ENCODE measurements at regions of chr10 and their contacts with region 1.

Region 1: GRCh38 chr10:114953047-114953446 is 15.1 kb downstream of the TRUB1 start:
- DNase-seq: no peak
- ATAC-seq: peak; percentile 78
- H3K4me3 ChIP-seq: no peak overlapping the region
- H3K27ac ChIP-seq: no peak overlapping the region
- H3K4me1 ChIP-seq: peaks cover 13% of the 10 kb centered on the region; the same call in 1 of the 2 replicates
- H3K27me3 ChIP-seq: no peaks in the 10 kb centered on the region
- CTCF ChIP-seq: no peak
- EP300 ChIP-seq: 0 out of 4 replicates have a peak, but pooled peaks of 1 of the 2 experiments have one; percentile 17
- POLR2A ChIP-seq: no peak
- RAD21 ChIP-seq: no peak

Region 2: GRCh38 chr10:114821293-114821914 is 131.6 kb before region 1 on chr10 and contains the start of gene FHIP2A:
- CTCF ChIA-PET with region 1: interaction called, 3 read pairs
- POLR2A ChIA-PET with region 1: no interaction called
- RAD21 ChIA-PET with region 1: no interaction called
- SMC1A ChIA-PET with region 1: no interaction called
- in situ Hi-C with region 1: no loop called
- intact Hi-C with region 1: loop called (anchors 5 kb)
- DNase-seq: no peak
- ATAC-seq: peak; percentile 84
- H3K4me3 ChIP-seq: peak within 1 kb of the TSS; percentile 75
- H3K27ac ChIP-seq: peak within 1 kb of the TSS; percentile 80
- H3K4me1 ChIP-seq: peaks cover 16% of the 10 kb centered on the region
- H3K27me3 ChIP-seq: no peaks in the 10 kb centered on the region
- CTCF ChIP-seq: peak; percentile 30 to 59 (median 51); a peak in 3 of 6 replicates
- EP300 ChIP-seq: no peak
- POLR2A ChIP-seq: peak; percentile 73
- RAD21 ChIP-seq: peak; percentile 58
- polyA plus RNA-seq, gene FHIP2A: 6.8 to 9.2 TPM

Region 3: DNA sequence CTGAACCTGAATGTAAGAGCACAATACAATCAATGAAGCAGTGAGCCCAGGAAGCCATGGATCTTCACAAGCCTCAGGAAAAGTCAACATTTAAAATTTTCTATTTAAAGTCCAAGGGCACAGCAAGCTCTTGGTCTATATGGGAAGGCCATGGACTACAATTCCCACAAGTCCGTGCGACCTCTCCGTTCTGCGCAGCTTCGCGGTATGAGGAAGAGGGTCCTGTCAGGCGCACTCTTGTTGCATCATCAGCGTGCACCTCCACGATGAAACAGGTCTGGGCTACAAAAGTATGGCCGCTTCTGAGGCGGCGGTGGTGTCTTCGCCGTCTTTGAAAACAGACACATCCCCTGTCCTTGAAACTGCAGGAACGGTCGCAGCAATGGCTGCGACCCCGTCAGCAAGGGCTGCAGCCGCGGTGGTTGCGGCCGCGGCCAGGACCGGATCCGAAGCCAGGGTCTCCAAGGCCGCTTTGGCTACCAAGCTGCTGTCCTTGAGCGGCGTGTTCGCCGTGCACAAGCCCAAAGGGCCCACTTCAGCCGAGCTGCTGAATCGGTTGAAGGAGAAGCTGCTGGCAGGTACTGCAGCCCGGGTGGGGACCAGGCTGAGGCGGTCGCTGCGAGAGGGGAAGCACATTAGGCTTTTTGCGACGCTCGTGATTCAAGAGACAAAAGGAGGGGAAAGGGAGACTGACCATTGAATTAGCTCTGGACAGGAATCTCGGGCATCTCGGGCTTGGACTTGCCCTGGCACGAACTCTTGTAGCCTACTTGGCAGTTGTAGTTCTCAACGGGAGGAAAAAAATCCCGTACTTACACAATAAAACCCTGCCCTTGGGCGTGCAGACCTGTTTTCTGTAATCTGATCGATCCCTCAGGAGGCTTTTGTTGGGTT is 14.8 kb before region 1 on chr10 and contains the start of gene TRUB1:
- CTCF ChIA-PET with region 1: interaction called, 4 read pairs
- POLR2A ChIA-PET with region 1: interaction called, 3 read pairs
- RAD21 ChIA-PET with region 1: no interaction called
- SMC1A ChIA-PET with region 1: interaction called, 11 read pairs
- in situ Hi-C with region 1: no loop called
- intact Hi-C with region 1: no loop called
- DNase-seq: peak; percentile 76
- ATAC-seq: peak; percentile 99
- H3K4me3 ChIP-seq: peak within 1 kb of the TSS; percentile 97
- H3K27ac ChIP-seq: peak within 1 kb of the TSS; percentile 86
- H3K4me1 ChIP-seq: no peaks in the 10 kb centered on the region; the same call in 1 of the 2 replicates
- H3K27me3 ChIP-seq: no peaks in the 10 kb centered on the region
- CTCF ChIP-seq: no peak
- EP300 ChIP-seq: no peak
- POLR2A ChIP-seq: peak; percentile 88
- RAD21 ChIP-seq: no peak
- polyA plus RNA-seq, gene TRUB1: 8.1 to 10.4 TPM

Region 4: DNA sequence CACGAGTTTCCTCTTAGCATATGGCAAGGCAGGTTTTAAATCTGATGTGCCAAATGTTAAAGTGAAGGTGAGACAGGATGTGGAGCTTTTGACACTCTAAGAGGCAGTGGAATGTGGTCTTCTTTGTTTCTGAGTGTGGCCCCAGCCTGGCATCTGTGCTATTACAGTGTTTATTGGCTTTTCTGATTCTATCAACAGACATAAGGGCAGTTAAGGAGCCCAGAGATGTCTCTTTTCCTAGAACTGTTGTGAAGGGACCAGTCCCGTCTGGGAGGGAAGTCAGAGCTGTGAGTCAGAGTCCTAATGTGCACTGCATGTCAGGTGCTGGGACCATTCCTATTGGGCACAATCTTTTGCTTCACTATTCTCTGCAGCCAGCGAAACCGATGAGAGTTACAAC is 17.5 kb after region 1 on chr10:
- CTCF ChIA-PET with region 1: interaction called, 5 read pairs
- POLR2A ChIA-PET with region 1: no interaction called
- RAD21 ChIA-PET with region 1: no interaction called
- SMC1A ChIA-PET with region 1: interaction called, 11 read pairs
- in situ Hi-C with region 1: no loop called
- intact Hi-C with region 1: no loop called
- DNase-seq: no peak
- ATAC-seq: peak; percentile 15; the same call in 1 of the 3 replicates
- H3K4me3 ChIP-seq: no peak overlapping the region
- H3K27ac ChIP-seq: no peak overlapping the region
- H3K4me1 ChIP-seq: 0 out of 2 replicates have a peak, but pooled peaks cover 2% of the 10 kb centered on the region
- H3K27me3 ChIP-seq: no peaks in the 10 kb centered on the region
- CTCF ChIP-seq: no peak
- EP300 ChIP-seq: no peak
- POLR2A ChIP-seq: no peak
- RAD21 ChIP-seq: no peak